ENCODE measurements at regions of chr19 and their contacts with region 1.

Region 1: DNA sequence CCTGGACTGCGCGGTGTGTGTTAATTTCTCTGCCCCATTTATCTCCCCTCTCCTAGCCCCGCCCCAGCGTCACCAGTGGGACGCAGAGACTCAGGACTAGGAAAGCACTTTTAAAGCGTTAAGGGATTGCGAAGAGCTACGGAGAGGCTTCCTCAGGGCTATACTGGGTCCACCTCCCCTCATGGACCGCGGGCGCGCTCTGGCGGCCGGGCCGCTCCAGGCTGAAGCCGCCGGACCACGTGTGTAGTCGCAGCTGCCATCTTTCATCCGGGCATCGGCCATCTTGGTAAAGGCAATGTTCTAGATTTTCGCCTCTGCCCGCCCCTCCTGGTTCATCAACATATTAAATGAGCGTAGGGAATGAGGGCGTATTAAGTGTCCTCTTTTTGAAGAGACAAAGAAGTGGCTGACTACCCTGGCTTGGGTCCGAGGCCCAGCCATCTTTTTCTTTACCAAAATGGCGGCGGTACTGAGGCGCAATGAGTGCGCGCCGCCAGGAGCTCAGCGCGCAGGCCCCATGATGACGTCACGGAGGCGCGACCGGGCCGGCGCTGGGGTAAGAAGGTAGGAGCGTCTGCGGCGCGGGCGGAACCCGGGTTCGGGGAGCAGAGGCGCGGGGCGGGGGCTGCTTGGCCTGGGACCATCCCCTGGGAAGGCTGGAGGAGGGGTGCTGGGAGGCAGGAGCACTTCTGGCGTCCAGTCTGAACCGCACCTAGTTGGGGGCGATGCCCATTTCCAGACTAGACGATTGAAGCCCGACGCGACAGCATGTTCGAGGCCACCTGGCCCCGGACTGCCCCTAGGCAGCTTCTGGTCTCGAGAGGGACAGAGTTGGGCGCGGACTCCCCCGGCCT is at the start of gene CCDC124:
- DNase-seq: peak; percentile 95
- ATAC-seq: peak; percentile 84
- H3K4me3 ChIP-seq: peak within 1 kb of the TSS; percentile 86
- H3K27ac ChIP-seq: peak within 1 kb of the TSS; percentile 83
- H3K4me1 ChIP-seq: peaks cover 9% of the 10 kb centered on the region
- H3K27me3 ChIP-seq: no peaks in the 10 kb centered on the region
- CTCF ChIP-seq: peak; percentile 95
- total RNA-seq, gene CCDC124: 165 and 247 TPM in 2 replicates

Region 2: GRCh38 chr19:17873786-17874757 is 58.6 kb before region 1 on chr19:
- CTCF ChIA-PET with region 1: interaction called, 105 read pairs
- POLR2A ChIA-PET with region 1: interaction called, 3 read pairs
- intact Hi-C with region 1: loop called (anchors 1 kb)
- DNase-seq: peak; percentile 60
- ATAC-seq: peak; percentile 56
- H3K4me3 ChIP-seq: peak overlapping the region; percentile 65
- H3K27ac ChIP-seq: no peak overlapping the region
- H3K4me1 ChIP-seq: peaks cover 5% of the 10 kb centered on the region; the same call in 1 of the 2 replicates
- H3K27me3 ChIP-seq: 0 out of 2 replicates have a peak, but pooled peaks cover 12% of the 10 kb centered on the region
- CTCF ChIP-seq: no peak

Region 3: DNA sequence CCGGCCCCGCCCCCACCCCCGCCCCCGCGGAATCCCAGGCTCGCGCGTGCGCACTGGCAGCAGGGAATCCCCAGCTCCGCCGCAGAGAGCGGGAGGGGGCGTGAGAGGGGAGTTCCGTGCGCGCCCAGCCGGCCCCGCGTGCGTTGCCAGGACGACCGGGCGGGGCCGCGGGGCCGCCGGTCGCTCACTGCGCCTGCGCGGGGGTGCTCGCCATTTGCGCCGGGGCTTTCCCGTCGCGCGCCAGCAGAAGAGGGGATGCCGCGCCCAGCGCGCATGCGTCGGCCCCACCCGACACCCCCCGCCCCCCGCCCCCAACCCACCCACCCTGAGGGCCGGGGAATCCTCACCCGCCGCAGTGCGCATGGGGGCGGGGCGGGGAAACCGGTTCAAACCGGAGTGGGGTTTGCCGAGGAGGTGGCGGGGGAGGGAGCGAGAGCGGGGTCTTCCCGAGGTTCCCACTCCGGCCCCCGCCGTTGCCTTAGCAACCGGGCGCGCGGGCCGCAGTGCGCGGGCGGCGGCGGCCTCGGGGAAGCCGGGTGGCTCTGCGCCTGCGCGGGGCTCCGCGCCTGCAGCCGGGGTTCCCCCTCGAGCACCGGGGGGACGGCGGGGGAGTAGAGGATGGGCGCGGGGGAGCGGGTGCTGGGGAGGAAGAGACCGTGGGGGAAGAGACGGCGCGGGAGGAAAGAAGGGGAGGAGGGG is 15.3 kb after region 1 on chr19:
- CTCF ChIA-PET with region 1: interaction called, 6 read pairs
- POLR2A ChIA-PET with region 1: interaction called, 11 read pairs
- intact Hi-C with region 1: no loop called
- DNase-seq: peak; percentile 95
- ATAC-seq: peak; percentile 33
- H3K4me3 ChIP-seq: peak overlapping the region; percentile 66
- H3K27ac ChIP-seq: no peak overlapping the region
- H3K4me1 ChIP-seq: peaks cover 37% of the 10 kb centered on the region
- H3K27me3 ChIP-seq: peaks cover 37% of the 10 kb centered on the region
- CTCF ChIP-seq: no peak